GM12878 (cell line): ENCODE measurements at regions of chr1 and their contacts with region 1.

Region 1: GRCh38 chr1:88683541-88684481 is at the start of gene PKN2:
- DNase-seq: peak; percentile 92
- ATAC-seq: peak; percentile 91
- H3K4me3 ChIP-seq: peak within 1 kb of the TSS; percentile 95
- H3K27ac ChIP-seq: peak within 1 kb of the TSS; percentile 93
- H3K4me1 ChIP-seq: no peaks in the 10 kb centered on the region
- H3K27me3 ChIP-seq: no peaks in the 10 kb centered on the region
- CTCF ChIP-seq: peak; percentile 10 to 35 (median 23); a peak in 3 of 6 replicates
- EP300 ChIP-seq: peak; percentile 30 to 62; a peak in 2 of 4 replicates
- POLR2A ChIP-seq: peak; percentile 95
- RAD21 ChIP-seq: no peak
- polyA plus RNA-seq, gene PKN2: 2.6 to 3.8 TPM

Region 2: DNA sequence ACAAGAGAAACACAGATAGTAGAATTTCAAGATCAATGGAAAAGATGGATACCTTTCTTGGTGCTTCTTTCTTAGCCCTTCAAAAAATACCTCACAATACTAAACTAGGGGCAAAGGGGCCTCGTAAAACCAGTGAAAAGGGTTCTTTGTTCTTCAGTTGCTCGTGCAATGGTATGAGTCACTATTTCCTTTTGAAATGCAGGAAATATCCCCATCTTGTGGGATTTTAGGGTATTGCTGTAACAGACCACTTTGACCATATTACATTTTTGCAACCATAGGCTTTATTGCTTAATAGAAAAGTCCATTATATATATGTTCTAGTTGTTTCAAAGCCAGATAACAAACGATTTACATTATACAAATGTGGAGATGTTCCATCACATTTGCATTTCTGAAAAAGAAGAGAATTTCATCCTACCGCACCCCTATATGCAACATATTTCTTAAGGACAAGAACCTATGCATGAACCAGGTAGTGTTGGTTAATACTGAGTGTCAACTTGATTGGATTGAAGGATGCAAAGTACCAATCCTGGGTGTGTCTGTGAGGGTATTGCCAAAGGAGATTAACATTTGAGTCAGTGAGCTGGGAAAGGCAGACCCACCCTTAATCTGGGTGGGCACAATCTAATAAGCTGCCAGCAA is 88.3 kb before region 1 on chr1:
- CTCF ChIA-PET with region 1: no interaction called
- POLR2A ChIA-PET with region 1: no interaction called
- RAD21 ChIA-PET with region 1: no interaction called
- SMC1A ChIA-PET with region 1: no interaction called
- in situ Hi-C with region 1: no loop called
- intact Hi-C with region 1: no loop called
- DNase-seq: peak; percentile 12
- ATAC-seq: peak; percentile 39
- H3K4me3 ChIP-seq: no peak overlapping the region
- H3K27ac ChIP-seq: no peak overlapping the region
- H3K4me1 ChIP-seq: no peaks in the 10 kb centered on the region
- H3K27me3 ChIP-seq: no peaks in the 10 kb centered on the region
- CTCF ChIP-seq: peak; percentile 20 to 53 (median 33); a peak in 5 of 6 replicates
- EP300 ChIP-seq: no peak
- POLR2A ChIP-seq: no peak
- RAD21 ChIP-seq: peak; percentile 69

Region 3: GRCh38 chr1:88647249-88647645 is 36.6 kb before region 1 on chr1:
- CTCF ChIA-PET with region 1: interaction called, 123 read pairs
- POLR2A ChIA-PET with region 1: interaction called, 7 read pairs
- RAD21 ChIA-PET with region 1: interaction called, 21 read pairs
- SMC1A ChIA-PET with region 1: interaction called, 7 read pairs
- in situ Hi-C with region 1: no loop called
- intact Hi-C with region 1: no loop called
- DNase-seq: no peak
- ATAC-seq: peak; percentile 96
- H3K4me3 ChIP-seq: no peak overlapping the region
- H3K27ac ChIP-seq: no peak overlapping the region
- H3K4me1 ChIP-seq: no peaks in the 10 kb centered on the region
- H3K27me3 ChIP-seq: no peaks in the 10 kb centered on the region
- CTCF ChIP-seq: no peak
- EP300 ChIP-seq: no peak
- POLR2A ChIP-seq: no peak
- RAD21 ChIP-seq: no peak

Region 4: GRCh38 chr1:88655685-88656299 is 28.0 kb before region 1 on chr1:
- CTCF ChIA-PET with region 1: interaction called, 123 read pairs
- POLR2A ChIA-PET with region 1: interaction called, 7 read pairs
- RAD21 ChIA-PET with region 1: interaction called, 66 read pairs
- SMC1A ChIA-PET with region 1: interaction called, 14 read pairs
- in situ Hi-C with region 1: no loop called
- intact Hi-C with region 1: no loop called
- DNase-seq: no peak
- ATAC-seq: no peak
- H3K4me3 ChIP-seq: no peak overlapping the region
- H3K27ac ChIP-seq: no peak overlapping the region
- H3K4me1 ChIP-seq: peaks cover 5% of the 10 kb centered on the region
- H3K27me3 ChIP-seq: no peaks in the 10 kb centered on the region
- CTCF ChIP-seq: peak; percentile 26 to 52 (median 51); a peak in 4 of 6 replicates
- EP300 ChIP-seq: no peak
- POLR2A ChIP-seq: no peak
- RAD21 ChIP-seq: peak; percentile 47

Region 5: DNA sequence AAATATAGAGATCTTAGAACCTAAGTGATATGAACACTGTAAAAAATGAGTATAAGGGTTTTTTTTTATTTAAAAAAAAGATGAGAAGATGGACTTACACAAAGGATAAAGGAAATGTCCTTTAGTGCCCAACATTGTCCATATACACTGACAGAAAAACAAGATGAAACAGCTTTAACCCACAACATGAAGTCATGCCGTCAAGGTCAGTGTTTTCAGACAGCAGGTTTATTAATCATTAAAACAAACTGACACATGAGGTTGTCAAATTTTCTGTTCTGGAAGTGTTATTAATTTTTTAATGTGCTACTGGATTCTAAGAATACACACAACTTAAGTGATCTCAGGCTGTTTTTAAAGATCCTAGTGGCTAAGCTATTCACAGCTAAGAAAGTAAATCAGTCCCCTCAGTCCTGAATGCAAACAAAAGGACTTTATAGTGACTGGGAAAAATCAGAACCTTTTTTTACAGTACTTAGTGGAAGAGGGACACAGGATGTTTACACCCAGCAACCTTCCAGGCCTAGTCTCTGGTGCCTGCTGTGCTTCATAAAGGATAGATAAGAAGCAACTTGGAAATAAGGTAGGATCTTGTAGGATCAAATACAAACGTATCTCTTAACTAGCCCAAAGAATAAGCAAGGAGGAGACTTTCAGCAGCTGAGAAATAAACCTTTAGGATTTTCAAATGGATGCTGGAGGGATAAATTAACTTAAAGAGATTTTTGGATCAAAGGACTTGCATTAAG is 21.7 kb before region 1 on chr1:
- CTCF ChIA-PET with region 1: interaction called, 123 read pairs
- POLR2A ChIA-PET with region 1: interaction called, 7 read pairs
- RAD21 ChIA-PET with region 1: interaction called, 66 read pairs
- SMC1A ChIA-PET with region 1: interaction called, 9 read pairs
- in situ Hi-C with region 1: no loop called
- intact Hi-C with region 1: loop called (anchors 1 kb)
- DNase-seq: no peak
- ATAC-seq: peak; percentile 73
- H3K4me3 ChIP-seq: no peak overlapping the region
- H3K27ac ChIP-seq: no peak overlapping the region
- H3K4me1 ChIP-seq: peaks cover 9% of the 10 kb centered on the region
- H3K27me3 ChIP-seq: no peaks in the 10 kb centered on the region
- CTCF ChIP-seq: no peak
- EP300 ChIP-seq: no peak
- POLR2A ChIP-seq: no peak
- RAD21 ChIP-seq: no peak

Region 6: GRCh38 chr1:88670462-88670861 is 13.3 kb before region 1 on chr1:
- CTCF ChIA-PET with region 1: interaction called, 4 read pairs
- POLR2A ChIA-PET with region 1: interaction called, 10 read pairs
- RAD21 ChIA-PET with region 1: no interaction called
- SMC1A ChIA-PET with region 1: interaction called, 9 read pairs
- in situ Hi-C with region 1: no loop called
- intact Hi-C with region 1: no loop called
- DNase-seq: no peak
- ATAC-seq: no peak
- H3K4me3 ChIP-seq: no peak overlapping the region
- H3K27ac ChIP-seq: no peak overlapping the region
- H3K4me1 ChIP-seq: no peaks in the 10 kb centered on the region
- H3K27me3 ChIP-seq: no peaks in the 10 kb centered on the region
- CTCF ChIP-seq: no peak
- EP300 ChIP-seq: no peak
- POLR2A ChIP-seq: no peak
- RAD21 ChIP-seq: no peak

Region 7: GRCh38 chr1:88695781-88696180 is 12.0 kb after region 1 on chr1:
- CTCF ChIA-PET with region 1: interaction called, 29 read pairs
- POLR2A ChIA-PET with region 1: interaction called, 17 read pairs
- RAD21 ChIA-PET with region 1: interaction called, 27 read pairs
- SMC1A ChIA-PET with region 1: interaction called, 72 read pairs
- in situ Hi-C with region 1: no loop called
- intact Hi-C with region 1: no loop called
- DNase-seq: no peak
- ATAC-seq: no peak
- H3K4me3 ChIP-seq: no peak overlapping the region
- H3K27ac ChIP-seq: no peak overlapping the region
- H3K4me1 ChIP-seq: peaks cover 4% of the 10 kb centered on the region
- H3K27me3 ChIP-seq: no peaks in the 10 kb centered on the region
- CTCF ChIP-seq: no peak
- EP300 ChIP-seq: no peak
- POLR2A ChIP-seq: no peak
- RAD21 ChIP-seq: no peak

Region 8: GRCh38 chr1:88701275-88701674 is 17.5 kb after region 1 on chr1:
- CTCF ChIA-PET with region 1: interaction called, 29 read pairs
- POLR2A ChIA-PET with region 1: interaction called, 17 read pairs
- RAD21 ChIA-PET with region 1: interaction called, 27 read pairs
- SMC1A ChIA-PET with region 1: interaction called, 72 read pairs
- in situ Hi-C with region 1: no loop called
- intact Hi-C with region 1: no loop called
- DNase-seq: no peak
- ATAC-seq: peak; percentile 86
- H3K4me3 ChIP-seq: no peak overlapping the region
- H3K27ac ChIP-seq: peak overlapping the region; percentile 59
- H3K4me1 ChIP-seq: peaks cover 17% of the 10 kb centered on the region
- H3K27me3 ChIP-seq: no peaks in the 10 kb centered on the region
- CTCF ChIP-seq: no peak
- EP300 ChIP-seq: no peak
- POLR2A ChIP-seq: no peak
- RAD21 ChIP-seq: no peak